Activated CD4-positive, alpha-beta memory T cell treated with anti-CD3 and anti-CD28 coated beads for 36 hours (primary cell): ENCODE measurements at regions of chr6 and their contacts with region 1.

Region 1: GRCh38 chr6:42532038-42532669 is 31.7 kb upstream of the UBR2 start:
- DNase-seq: no peak
- H3K4me3 Mint-ChIP-seq: no peak overlapping the region
- H3K27ac Mint-ChIP-seq: no peak overlapping the region
- H3K4me1 Mint-ChIP-seq: peaks cover 4% of the 10 kb centered on the region
- H3K27me3 Mint-ChIP-seq: no peaks in the 10 kb centered on the region

Region 2: DNA sequence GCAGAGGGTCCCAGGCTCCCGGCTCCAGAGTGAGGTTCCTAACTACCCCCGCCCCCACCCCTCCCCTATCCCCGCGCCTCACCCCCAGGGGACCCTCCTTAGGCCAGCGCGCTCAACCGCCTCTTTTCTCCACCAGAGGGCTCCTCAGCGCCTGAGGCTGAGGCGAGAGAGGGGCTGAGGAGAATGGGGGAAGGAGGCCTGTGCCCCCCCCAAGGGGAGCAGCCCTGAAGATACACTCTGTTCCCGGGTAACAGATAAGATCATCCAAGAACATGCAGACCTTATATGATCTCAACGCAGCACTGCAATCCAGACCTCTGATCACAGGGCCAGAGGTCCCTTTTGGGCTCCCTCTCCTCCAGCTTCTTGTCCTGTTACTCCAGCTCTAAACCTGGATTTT is 271.2 kb before region 1 on chr6:
- CTCF ChIA-PET with region 1: interaction called, 34 read pairs
- POLR2A ChIA-PET with region 1: no interaction called
- intact Hi-C with region 1: loop called (anchors 5 kb)
- DNase-seq: peak; percentile 38
- H3K4me3 Mint-ChIP-seq: no peak overlapping the region
- H3K27ac Mint-ChIP-seq: no peak overlapping the region
- H3K4me1 Mint-ChIP-seq: no peaks in the 10 kb centered on the region
- H3K27me3 Mint-ChIP-seq: no peaks in the 10 kb centered on the region

Region 3: DNA sequence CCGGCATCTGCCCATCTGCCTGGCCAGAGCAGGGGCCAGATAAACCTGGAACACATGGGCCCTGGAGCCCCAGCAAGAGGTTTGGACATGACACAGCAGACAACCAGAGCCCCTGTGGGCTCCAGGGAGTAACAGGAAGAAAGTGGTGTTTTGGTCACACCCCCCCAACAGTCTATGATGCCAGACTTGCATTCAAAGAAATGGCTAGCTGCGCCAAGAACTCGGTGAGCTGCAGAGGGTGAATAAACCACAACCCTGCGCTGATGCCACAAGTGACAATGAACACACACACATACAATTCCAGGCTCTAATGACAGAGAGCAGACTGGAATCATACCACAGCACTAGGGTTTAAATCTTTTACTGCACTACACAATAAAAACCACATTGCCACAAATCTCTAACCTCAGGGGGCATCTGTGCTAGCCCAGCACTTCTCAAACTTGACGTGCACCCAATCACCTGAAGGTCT is 114.5 kb before region 1 on chr6:
- CTCF ChIA-PET with region 1: no interaction called
- POLR2A ChIA-PET with region 1: no interaction called
- intact Hi-C with region 1: no loop called
- DNase-seq: peak; percentile 76
- H3K4me3 Mint-ChIP-seq: no peak overlapping the region
- H3K27ac Mint-ChIP-seq: peak overlapping the region; percentile 50
- H3K4me1 Mint-ChIP-seq: peaks cover 59% of the 10 kb centered on the region
- H3K27me3 Mint-ChIP-seq: no peaks in the 10 kb centered on the region

Region 4: GRCh38 chr6:42440778-42441696 is 91.1 kb before region 1 on chr6:
- CTCF ChIA-PET with region 1: interaction called, 10 read pairs
- POLR2A ChIA-PET with region 1: no interaction called
- intact Hi-C with region 1: no loop called
- DNase-seq: no peak
- H3K4me3 Mint-ChIP-seq: peak overlapping the region; percentile 60
- H3K27ac Mint-ChIP-seq: peak overlapping the region; percentile 75
- H3K4me1 Mint-ChIP-seq: peaks cover 65% of the 10 kb centered on the region
- H3K27me3 Mint-ChIP-seq: no peaks in the 10 kb centered on the region

Region 5: GRCh38 chr6:42493914-42494539 is 38.1 kb before region 1 on chr6:
- CTCF ChIA-PET with region 1: interaction called, 14 read pairs
- POLR2A ChIA-PET with region 1: no interaction called
- intact Hi-C with region 1: no loop called
- DNase-seq: no peak
- H3K4me3 Mint-ChIP-seq: no peak overlapping the region
- H3K27ac Mint-ChIP-seq: no peak overlapping the region
- H3K4me1 Mint-ChIP-seq: no peaks in the 10 kb centered on the region
- H3K27me3 Mint-ChIP-seq: no peaks in the 10 kb centered on the region

Region 6: GRCh38 chr6:42520786-42521607 is 11.2 kb before region 1 on chr6:
- CTCF ChIA-PET with region 1: interaction called, 11 read pairs
- POLR2A ChIA-PET with region 1: interaction called, 3 read pairs
- intact Hi-C with region 1: no loop called
- DNase-seq: peak; percentile 51
- H3K4me3 Mint-ChIP-seq: no peak overlapping the region
- H3K27ac Mint-ChIP-seq: peak overlapping the region; percentile 82
- H3K4me1 Mint-ChIP-seq: peaks cover 21% of the 10 kb centered on the region
- H3K27me3 Mint-ChIP-seq: peaks cover 1% of the 10 kb centered on the region